ENCODE measurements at regions of chr1 and their contacts with region 1.

Region 1: GRCh38 chr1:6245086-6245868 is 1.3 kb downstream of the HES3 start:
- DNase-seq: peak; percentile 71
- ATAC-seq: peak; percentile 84
- H3K4me3 ChIP-seq: no peak overlapping the region
- H3K27ac ChIP-seq: no peak overlapping the region
- H3K4me1 ChIP-seq: no peaks in the 10 kb centered on the region
- H3K27me3 ChIP-seq: peaks cover 71% of the 10 kb centered on the region
- CTCF ChIP-seq: peak; percentile 95
- POLR2A ChIP-seq: no peak
- RAD21 ChIP-seq: peak; percentile 83

Region 2: GRCh38 chr1:6052543-6053205 is 192.6 kb before region 1 on chr1:
- CTCF ChIA-PET with region 1: interaction called, 3 read pairs
- POLR2A ChIA-PET with region 1: no interaction called
- dilution Hi-C with region 1: no loop called
- in situ Hi-C with region 1: no loop called
- intact Hi-C with region 1: loop called (anchors 1 kb)
- DNase-seq: peak; percentile 68
- ATAC-seq: peak; percentile 83
- H3K4me3 ChIP-seq: no peak overlapping the region
- H3K27ac ChIP-seq: no peak overlapping the region
- H3K4me1 ChIP-seq: no peaks in the 10 kb centered on the region
- H3K27me3 ChIP-seq: peaks cover 6% of the 10 kb centered on the region; the same call in 1 of the 2 replicates
- CTCF ChIP-seq: peak; percentile 60
- POLR2A ChIP-seq: no peak
- RAD21 ChIP-seq: peak; percentile 72

Region 3: DNA sequence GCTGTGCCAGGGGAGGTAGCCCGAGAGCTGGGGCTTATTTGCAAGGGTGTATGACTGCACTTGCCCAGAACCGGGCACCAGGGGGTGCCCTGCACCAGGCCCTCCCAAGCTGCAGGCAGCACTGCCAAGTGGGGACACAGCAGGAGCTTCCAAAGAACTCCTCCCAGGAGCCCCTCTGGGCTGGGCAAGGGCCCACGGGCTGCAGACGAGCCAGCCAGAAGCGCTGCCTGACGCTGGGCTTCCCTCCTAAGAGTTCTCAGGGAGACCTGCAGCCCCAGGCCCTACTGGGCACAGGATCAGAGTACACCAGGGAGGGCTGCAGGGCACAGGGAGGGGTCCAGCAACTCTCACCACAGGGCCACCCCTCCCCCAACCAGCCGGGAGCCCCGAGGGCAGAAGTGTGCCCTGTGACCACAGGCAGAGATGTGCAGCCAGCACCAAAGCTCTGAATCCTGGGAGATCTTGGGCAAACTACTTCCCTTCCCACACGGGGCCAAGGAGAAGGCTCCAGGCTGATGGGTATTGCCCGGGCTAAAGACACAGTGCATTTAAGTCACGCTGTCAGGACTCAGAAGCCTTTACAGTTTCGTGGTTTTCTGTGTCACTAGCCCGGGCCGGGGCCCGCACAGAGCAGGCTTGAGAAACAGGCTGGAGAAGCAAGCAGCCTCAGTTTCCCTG is 136.2 kb before region 1 on chr1:
- CTCF ChIA-PET with region 1: interaction called, 4 read pairs
- POLR2A ChIA-PET with region 1: no interaction called
- dilution Hi-C with region 1: no loop called
- in situ Hi-C with region 1: no loop called
- intact Hi-C with region 1: loop called (anchors 2 kb)
- DNase-seq: peak; percentile 40
- ATAC-seq: peak; percentile 94
- H3K4me3 ChIP-seq: no peak overlapping the region
- H3K27ac ChIP-seq: no peak overlapping the region
- H3K4me1 ChIP-seq: no peaks in the 10 kb centered on the region
- H3K27me3 ChIP-seq: peaks cover 17% of the 10 kb centered on the region; the same call in 1 of the 2 replicates
- CTCF ChIP-seq: peak; percentile 56
- POLR2A ChIP-seq: no peak
- RAD21 ChIP-seq: peak; percentile 62

Region 4: DNA sequence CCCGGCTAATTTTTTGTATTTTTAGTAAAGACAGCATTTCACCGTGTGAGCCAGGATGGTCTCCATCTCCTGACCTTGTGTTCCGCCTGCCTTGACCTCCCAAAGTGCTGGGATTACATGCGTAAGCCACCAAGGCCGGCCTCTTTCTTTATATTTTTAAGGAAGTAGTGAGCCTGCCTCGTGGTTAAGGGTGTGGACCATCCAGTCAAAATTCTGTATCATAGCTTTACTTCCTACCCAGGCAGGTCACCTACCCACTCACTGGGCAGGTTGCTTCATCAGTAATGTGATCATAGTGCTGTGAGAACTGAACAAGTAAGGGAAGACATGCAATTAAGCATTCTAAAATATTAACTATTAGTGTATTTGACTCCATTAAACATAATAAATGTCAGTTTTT is 156.4 kb after region 1 on chr1:
- CTCF ChIA-PET with region 1: interaction called, 3 read pairs
- POLR2A ChIA-PET with region 1: no interaction called
- dilution Hi-C with region 1: no loop called
- in situ Hi-C with region 1: loop called (anchors 10 kb)
- intact Hi-C with region 1: loop called (anchors 2 kb)
- DNase-seq: no peak
- ATAC-seq: no peak
- H3K4me3 ChIP-seq: no peak overlapping the region
- H3K27ac ChIP-seq: no peak overlapping the region
- H3K4me1 ChIP-seq: no peaks in the 10 kb centered on the region
- H3K27me3 ChIP-seq: peaks cover 9% of the 10 kb centered on the region
- CTCF ChIP-seq: no peak
- POLR2A ChIP-seq: no peak
- RAD21 ChIP-seq: no peak

Region 5: DNA sequence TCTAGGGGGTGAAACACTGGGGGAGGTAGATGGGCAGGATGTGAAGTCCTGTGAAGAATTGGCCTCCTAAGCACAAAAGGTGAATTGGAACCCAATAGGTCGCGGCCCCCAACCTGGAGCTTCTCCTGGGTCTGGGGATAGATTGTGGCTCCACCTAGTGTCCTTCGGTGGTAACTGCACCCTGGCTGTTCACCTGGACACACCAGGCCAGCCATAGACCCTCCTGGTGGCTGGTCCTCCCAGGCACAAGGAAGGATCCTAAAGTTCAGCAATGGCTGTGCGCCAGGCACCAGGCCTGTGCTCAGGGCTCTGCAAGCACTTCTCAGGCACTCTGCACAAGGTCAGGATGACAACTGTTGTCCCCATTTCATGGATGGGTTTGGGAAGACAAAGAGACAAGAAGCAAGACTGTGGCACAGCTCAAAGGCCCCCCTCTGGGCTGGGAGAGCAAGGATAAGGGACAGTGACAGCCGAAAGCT is 192.8 kb after region 1 on chr1:
- CTCF ChIA-PET with region 1: interaction called, 3 read pairs
- POLR2A ChIA-PET with region 1: no interaction called
- dilution Hi-C with region 1: no loop called
- in situ Hi-C with region 1: no loop called
- intact Hi-C with region 1: loop called (anchors 1 kb)
- DNase-seq: peak; percentile 33
- ATAC-seq: peak; percentile 80
- H3K4me3 ChIP-seq: no peak overlapping the region
- H3K27ac ChIP-seq: no peak overlapping the region
- H3K4me1 ChIP-seq: peaks cover 1% of the 10 kb centered on the region; the same call in 1 of the 2 replicates
- H3K27me3 ChIP-seq: peaks cover 42% of the 10 kb centered on the region
- CTCF ChIP-seq: peak; percentile 71
- POLR2A ChIP-seq: no peak
- RAD21 ChIP-seq: peak; percentile 59

Region 6: GRCh38 chr1:6489799-6490180 is 244.5 kb after region 1 on chr1:
- CTCF ChIA-PET with region 1: interaction called, 3 read pairs
- POLR2A ChIA-PET with region 1: no interaction called
- dilution Hi-C with region 1: no loop called
- in situ Hi-C with region 1: no loop called
- intact Hi-C with region 1: loop called (anchors 5 kb)
- DNase-seq: peak; percentile 69
- ATAC-seq: peak; percentile 77
- H3K4me3 ChIP-seq: peak overlapping the region; percentile 66
- H3K27ac ChIP-seq: peak overlapping the region; percentile 42
- H3K4me1 ChIP-seq: peaks cover 12% of the 10 kb centered on the region
- H3K27me3 ChIP-seq: no peaks in the 10 kb centered on the region
- CTCF ChIP-seq: peak; percentile 86
- POLR2A ChIP-seq: no peak
- RAD21 ChIP-seq: peak; percentile 65

Region 7: GRCh38 chr1:7912743-7913557 is 1667.7 kb after region 1 on chr1:
- CTCF ChIA-PET with region 1: no interaction called
- POLR2A ChIA-PET with region 1: no interaction called
- dilution Hi-C with region 1: no loop called
- in situ Hi-C with region 1: no loop called
- intact Hi-C with region 1: no loop called
- DNase-seq: no peak
- ATAC-seq: no peak
- H3K4me3 ChIP-seq: no peak overlapping the region
- H3K27ac ChIP-seq: no peak overlapping the region
- H3K4me1 ChIP-seq: no peaks in the 10 kb centered on the region
- H3K27me3 ChIP-seq: peaks cover 2% of the 10 kb centered on the region; the same call in 1 of the 2 replicates
- CTCF ChIP-seq: no peak
- POLR2A ChIP-seq: no peak
- RAD21 ChIP-seq: no peak

Measured in IMR-90 (cell line).